Activated CD4-positive, alpha-beta T cell treated with anti-CD3 and anti-CD28 coated beads for 36 hours (primary cell): ENCODE measurements at regions of chr12 and their contacts with region 1.

Region 1: DNA sequence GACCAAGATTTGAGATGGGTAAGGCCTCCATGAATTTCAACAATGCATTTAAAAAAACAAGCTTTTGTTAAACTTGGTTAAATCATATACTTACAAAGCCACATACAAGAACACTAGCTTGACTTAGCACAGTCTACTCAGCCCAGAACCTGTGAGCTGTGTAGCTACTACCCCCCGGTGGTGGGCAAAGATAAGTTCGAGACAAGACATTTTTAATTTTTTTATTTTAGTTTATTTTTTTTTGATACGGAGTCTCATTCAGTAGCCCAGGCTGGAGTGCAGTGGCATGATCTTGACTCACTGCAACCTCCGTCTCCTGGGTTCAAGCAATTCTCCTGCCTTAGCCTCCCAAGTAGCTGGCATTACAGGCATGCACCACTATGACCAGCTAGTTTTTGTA is 3.7 kb upstream of the NECAP1 start:
- DNase-seq: peak; percentile 78
- ATAC-seq: peak; percentile 30
- H3K4me3 Mint-ChIP-seq: peak overlapping the region; percentile 10
- H3K27ac Mint-ChIP-seq: peak overlapping the region; percentile 57
- H3K4me1 Mint-ChIP-seq: peaks cover 38% of the 10 kb centered on the region
- H3K27me3 Mint-ChIP-seq: no peaks in the 10 kb centered on the region

Region 2: DNA sequence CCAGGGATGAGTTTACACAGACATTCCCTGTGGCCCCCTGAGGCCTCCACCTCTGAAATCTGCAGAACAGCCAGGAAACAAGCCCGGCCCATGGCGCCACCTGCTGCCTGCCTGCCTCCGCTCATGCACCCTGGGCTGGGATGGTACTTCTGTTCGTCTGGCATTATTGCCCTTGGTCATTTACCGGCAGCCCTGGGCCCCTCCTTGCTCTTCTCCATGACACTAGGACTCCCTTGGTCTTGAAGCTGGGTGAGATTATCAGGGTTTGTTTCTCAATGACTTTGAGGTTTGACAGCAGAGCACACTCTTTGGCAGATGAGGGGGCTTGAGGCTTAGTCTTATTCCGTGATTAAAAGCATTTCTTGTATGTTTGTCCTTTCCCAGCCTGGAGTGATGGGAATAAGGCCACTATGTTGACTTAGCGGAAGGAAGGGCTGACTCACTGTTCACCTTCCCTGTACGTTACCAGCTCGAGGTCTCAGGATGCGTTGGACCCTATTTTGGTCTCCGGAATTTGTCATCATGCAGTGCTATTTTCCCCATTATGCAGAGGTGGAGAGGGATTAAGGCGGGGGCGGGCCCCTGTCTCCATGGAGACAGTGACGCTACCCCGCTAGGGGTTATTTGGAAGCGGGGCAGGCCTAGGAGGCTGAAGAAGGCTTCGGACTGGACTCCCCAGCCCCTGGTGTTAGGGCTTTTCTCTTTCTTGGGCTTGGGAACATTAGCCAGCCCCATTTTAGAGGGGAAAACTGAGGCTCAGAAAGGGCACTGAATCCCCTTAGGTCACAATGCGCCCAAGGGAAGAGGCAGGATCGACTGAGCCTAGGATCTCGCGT is 889.6 kb before region 1 on chr12:
- CTCF ChIA-PET with region 1: no interaction called
- POLR2A ChIA-PET with region 1: no interaction called
- intact Hi-C with region 1: loop called in 1 of 2 experiments (anchors 1 kb)
- DNase-seq: peak; percentile 88
- ATAC-seq: peak; percentile 64
- H3K4me3 Mint-ChIP-seq: peak overlapping the region; percentile 85
- H3K27ac Mint-ChIP-seq: peak overlapping the region; percentile 94
- H3K4me1 Mint-ChIP-seq: peaks cover 35% of the 10 kb centered on the region
- H3K27me3 Mint-ChIP-seq: no peaks in the 10 kb centered on the region

Region 3: GRCh38 chr12:7933255-7933729 is 145.1 kb before region 1 on chr12:
- CTCF ChIA-PET with region 1: interaction called, 14 read pairs
- POLR2A ChIA-PET with region 1: interaction called, 4 read pairs
- intact Hi-C with region 1: loop called (anchors 1 kb)
- DNase-seq: peak; percentile 85
- ATAC-seq: peak; percentile 76
- H3K4me3 Mint-ChIP-seq: no peak overlapping the region
- H3K27ac Mint-ChIP-seq: no peak overlapping the region
- H3K4me1 Mint-ChIP-seq: peaks cover 34% of the 10 kb centered on the region
- H3K27me3 Mint-ChIP-seq: no peaks in the 10 kb centered on the region

Region 4: DNA sequence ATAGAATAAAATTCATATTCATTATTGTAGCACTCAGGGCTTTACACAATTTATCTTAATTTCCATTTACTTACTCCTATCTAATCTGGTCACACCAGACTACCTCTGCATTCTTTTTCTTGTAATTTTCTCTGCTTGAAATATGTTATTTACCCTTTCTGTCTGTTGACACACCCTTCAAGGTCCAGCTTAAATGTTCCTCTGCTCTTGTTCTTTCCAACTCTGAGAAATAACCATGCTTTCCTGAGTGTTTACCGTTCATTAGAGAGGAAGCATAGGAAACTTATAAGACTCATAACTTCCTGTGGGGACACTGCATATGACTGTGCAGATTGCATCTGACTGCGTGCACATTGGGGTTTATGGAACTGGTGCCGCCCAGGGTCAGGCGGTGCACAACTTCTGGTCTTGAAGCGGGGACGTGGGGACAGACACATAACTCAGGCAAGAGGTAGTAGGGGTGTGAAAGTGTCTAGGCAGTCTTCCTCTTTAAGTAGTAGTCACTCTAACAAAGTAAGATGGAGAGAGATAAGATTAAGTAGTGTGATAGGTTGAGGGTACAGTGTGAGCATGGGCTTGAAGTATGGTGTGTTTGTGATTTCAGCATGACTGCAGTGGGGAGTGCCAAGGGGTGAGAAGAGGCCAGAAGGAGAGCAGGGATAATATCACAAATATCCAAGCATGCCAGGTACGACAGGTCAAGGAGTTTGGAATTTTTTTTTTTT is 88.4 kb before region 1 on chr12:
- CTCF ChIA-PET with region 1: interaction called, 9 read pairs
- POLR2A ChIA-PET with region 1: no interaction called
- intact Hi-C with region 1: loop called in 1 of 2 experiments (anchors 1 kb)
- DNase-seq: peak; percentile 94
- ATAC-seq: peak; percentile 92
- H3K4me3 Mint-ChIP-seq: peak overlapping the region; percentile 62
- H3K27ac Mint-ChIP-seq: peak overlapping the region; percentile 90
- H3K4me1 Mint-ChIP-seq: peaks cover 42% of the 10 kb centered on the region
- H3K27me3 Mint-ChIP-seq: no peaks in the 10 kb centered on the region

Region 5: DNA sequence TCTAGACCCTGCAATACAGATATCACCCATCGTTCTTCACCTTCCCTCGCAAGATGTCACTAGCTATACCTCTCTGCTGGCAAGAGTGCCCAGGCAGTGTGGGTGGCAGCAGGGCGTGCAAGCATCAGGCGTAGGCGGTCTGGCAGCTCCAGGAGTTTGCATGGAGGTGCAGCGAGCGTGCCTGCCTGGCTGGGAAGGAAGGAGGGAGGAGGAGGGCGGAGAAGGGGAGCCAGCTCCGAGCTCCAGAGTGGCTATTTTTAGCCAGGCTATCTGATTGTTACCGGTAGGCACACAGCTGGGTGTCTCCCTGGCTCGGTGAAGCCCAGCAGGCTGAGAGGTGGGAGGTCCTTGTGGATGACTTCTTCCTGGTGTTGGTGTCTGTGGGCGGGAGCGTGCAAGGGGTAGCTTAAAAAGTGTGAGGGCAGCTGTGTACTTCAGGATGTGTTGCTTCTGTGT is 39.7 kb before region 1 on chr12:
- CTCF ChIA-PET with region 1: interaction called, 105 read pairs
- POLR2A ChIA-PET with region 1: no interaction called
- intact Hi-C with region 1: no loop called
- DNase-seq: peak; percentile 62
- ATAC-seq: peak; percentile 66
- H3K4me3 Mint-ChIP-seq: peak overlapping the region; percentile 18
- H3K27ac Mint-ChIP-seq: peak overlapping the region; percentile 20
- H3K4me1 Mint-ChIP-seq: peaks cover 56% of the 10 kb centered on the region
- H3K27me3 Mint-ChIP-seq: no peaks in the 10 kb centered on the region

Region 6: DNA sequence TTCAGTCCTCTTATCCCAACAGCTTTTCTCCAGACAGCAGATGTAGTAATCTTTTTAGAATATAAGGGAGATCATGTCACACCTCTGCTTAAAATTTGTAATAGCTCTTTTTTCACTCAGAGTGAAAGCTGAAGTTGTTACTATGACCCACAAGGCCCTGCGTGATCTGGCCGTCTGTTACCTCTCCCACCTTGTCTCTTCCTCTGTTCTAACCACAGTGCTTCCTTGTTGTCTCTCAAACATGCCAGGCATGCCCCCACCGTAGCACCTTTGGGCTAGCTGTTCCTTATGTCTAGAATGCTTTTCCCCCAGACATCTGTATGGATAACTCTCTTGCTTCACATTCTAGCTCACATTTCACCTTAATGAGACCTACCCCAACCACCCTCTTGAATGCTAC is 10.2 kb after region 1 on chr12:
- CTCF ChIA-PET with region 1: interaction called, 20 read pairs
- POLR2A ChIA-PET with region 1: interaction called, 3 read pairs
- intact Hi-C with region 1: no loop called
- DNase-seq: peak; percentile 64
- ATAC-seq: peak; percentile 87
- H3K4me3 Mint-ChIP-seq: peak overlapping the region; percentile 59
- H3K27ac Mint-ChIP-seq: peak overlapping the region; percentile 90
- H3K4me1 Mint-ChIP-seq: peaks cover 51% of the 10 kb centered on the region
- H3K27me3 Mint-ChIP-seq: no peaks in the 10 kb centered on the region

Region 7: DNA sequence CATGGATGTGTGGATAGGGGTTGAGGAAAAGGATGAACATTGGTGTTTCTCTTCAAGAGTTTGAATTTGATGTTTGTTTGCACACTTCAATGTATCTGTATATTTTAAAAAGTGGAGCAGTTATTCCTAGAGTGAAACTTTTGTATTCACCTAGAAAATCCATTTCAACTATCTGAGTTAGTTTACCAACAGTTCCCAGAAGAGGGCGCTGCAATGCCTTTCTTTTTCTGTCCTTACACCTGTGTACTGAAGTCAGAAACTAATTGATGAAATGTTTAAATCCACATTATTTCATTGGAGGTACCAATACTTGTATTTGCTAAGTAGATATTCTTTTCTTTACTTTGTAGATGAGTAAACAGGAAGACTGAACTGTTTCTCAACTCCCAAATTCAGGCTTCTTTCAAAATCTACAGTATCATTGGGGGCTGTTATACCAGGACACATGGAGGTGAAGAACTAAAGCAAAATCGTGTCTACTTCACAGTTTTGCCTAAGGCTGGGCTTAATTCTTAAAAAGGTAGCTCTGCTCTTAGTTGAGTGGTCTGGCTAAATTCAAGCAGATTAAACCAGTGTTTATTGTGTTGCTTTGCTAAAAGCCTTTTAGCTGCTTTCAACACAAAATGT is 1555.9 kb after region 1 on chr12:
- CTCF ChIA-PET with region 1: no interaction called
- POLR2A ChIA-PET with region 1: no interaction called
- intact Hi-C with region 1: no loop called
- DNase-seq: peak; percentile 88
- ATAC-seq: peak; percentile 85
- H3K4me3 Mint-ChIP-seq: no peak overlapping the region
- H3K27ac Mint-ChIP-seq: peak overlapping the region; percentile 82
- H3K4me1 Mint-ChIP-seq: peaks cover 43% of the 10 kb centered on the region
- H3K27me3 Mint-ChIP-seq: no peaks in the 10 kb centered on the region